ENCODE measurements at regions of chr2 and their contacts with region 1.

Region 1: GRCh38 chr2:219029829-219030165 is 11.5 kb downstream of the CFAP65 start:
- DNase-seq: peak; percentile 64
- H3K4me3 ChIP-seq: no peak overlapping the region
- H3K27ac ChIP-seq: no peak overlapping the region
- H3K4me1 ChIP-seq: no peaks in the 10 kb centered on the region
- H3K27me3 ChIP-seq: peaks cover 13 to 14% of the 10 kb centered on the region in 2 experiments
- CTCF ChIP-seq: peak; percentile 85 to 97
- POLR2A ChIP-seq: no peak

Region 2: DNA sequence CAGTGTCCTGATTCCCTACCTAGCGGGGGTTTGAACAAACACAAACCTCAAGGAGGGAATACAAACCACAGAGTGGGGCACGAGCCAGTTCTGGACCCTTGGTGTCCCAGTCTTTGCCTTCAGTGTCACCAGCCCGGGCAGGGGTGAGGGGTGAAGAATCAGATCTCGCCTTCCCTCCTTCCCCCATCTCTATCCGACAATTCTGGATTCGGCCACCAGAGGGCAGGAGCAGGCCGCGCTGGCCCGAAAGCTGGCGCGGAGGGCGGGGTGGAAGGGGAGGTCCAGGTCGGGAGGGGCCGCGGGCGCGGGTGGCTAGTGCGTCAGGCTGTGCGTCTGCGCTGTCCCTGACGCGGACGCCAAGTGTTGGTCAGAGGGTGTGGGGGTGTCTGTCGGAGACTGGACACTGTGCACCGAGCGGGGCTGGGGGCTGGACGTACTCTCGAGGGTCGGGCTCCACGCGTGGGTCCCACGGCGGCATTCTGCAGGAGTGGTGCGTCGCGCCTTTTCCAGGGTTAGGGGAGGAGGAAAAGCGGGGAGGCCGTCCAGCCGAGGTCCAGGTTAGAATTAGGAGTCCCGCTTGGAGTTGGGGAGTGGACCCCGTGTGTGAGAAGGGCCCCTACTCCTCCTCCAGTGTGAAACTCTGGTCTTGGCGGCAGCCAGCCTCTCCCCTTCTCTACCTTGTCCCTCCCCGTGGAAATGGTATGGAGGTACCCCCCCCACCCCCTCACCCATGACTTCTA is 33.7 kb before region 1 on chr2:
- CTCF ChIA-PET with region 1: interaction called, 26 read pairs
- POLR2A ChIA-PET with region 1: no interaction called
- dilution Hi-C with region 1: no loop called
- intact Hi-C with region 1: no loop called
- DNase-seq: peak; percentile 65
- H3K4me3 ChIP-seq: no peak overlapping the region
- H3K27ac ChIP-seq: no peak overlapping the region
- H3K4me1 ChIP-seq: peaks cover 5% of the 10 kb centered on the region
- H3K27me3 ChIP-seq: peaks cover 79 to 83% of the 10 kb centered on the region in 2 experiments
- CTCF ChIP-seq: peak; percentile 73 to 94
- POLR2A ChIP-seq: no peak

Region 3: GRCh38 chr2:219049282-219049681 is 19.5 kb after region 1 on chr2:
- CTCF ChIA-PET with region 1: interaction called, 28 read pairs
- POLR2A ChIA-PET with region 1: no interaction called
- dilution Hi-C with region 1: no loop called
- intact Hi-C with region 1: no loop called
- DNase-seq: no peak
- H3K4me3 ChIP-seq: no peak overlapping the region
- H3K27ac ChIP-seq: no peak overlapping the region
- H3K4me1 ChIP-seq: no peaks in the 10 kb centered on the region
- H3K27me3 ChIP-seq: peaks cover 0 to 5% of the 10 kb centered on the region in 2 experiments
- CTCF ChIP-seq: no peak
- POLR2A ChIP-seq: no peak

Region 4: DNA sequence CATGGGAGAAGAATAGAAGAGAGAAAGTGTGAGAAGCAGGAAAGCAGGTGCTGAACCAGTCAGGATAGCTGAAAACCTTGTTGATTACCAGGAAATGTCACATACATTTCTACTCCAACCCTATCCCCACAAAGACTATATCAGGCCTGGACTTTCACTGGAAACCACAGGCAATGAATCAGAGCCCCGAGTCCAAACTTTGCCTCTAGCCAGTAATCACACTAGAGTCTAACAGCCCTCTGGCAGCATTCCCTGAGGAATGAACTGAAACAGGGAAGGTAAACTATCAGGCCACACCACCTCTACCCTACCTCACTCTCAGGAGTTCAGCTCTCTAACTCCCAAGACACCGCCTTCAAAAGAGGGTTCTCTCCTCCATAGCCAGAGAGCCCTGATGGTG is 49.6 kb after region 1 on chr2:
- CTCF ChIA-PET with region 1: interaction called, 32 read pairs
- POLR2A ChIA-PET with region 1: no interaction called
- dilution Hi-C with region 1: no loop called
- intact Hi-C with region 1: no loop called
- DNase-seq: no peak
- H3K4me3 ChIP-seq: no peak overlapping the region
- H3K27ac ChIP-seq: no peak overlapping the region
- H3K4me1 ChIP-seq: no peaks in the 10 kb centered on the region
- H3K27me3 ChIP-seq: no peaks in the 10 kb centered on the region
- CTCF ChIP-seq: no peak
- POLR2A ChIP-seq: no peak

Region 5: DNA sequence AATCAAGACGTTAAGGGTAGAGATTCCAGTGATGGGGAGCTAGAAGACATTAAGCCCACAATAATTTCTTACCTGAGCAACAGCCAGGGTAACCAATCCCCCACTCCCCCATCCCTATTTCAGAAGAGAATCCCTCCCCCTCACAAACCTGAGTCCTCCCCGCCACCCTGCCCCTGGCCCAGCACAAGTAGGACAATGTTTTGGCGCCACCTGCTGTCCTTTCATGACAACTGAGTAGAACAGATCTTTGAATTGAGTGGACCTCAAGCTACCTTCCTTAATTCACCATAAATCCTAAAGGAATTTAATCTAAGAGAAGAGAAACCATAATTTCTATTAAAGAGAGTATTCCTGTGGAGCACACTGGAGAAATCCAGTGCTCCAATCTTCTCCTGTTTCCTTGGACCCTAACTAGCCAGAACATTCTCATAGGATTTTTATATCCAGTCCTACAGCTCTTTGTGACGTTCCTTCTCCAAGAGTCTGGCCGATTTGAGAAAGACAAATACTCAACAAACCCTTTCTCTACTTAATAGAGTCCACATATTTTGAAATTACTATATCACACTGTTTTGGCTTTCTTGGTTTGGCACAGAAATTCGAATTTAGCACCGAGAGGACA is 89.7 kb after region 1 on chr2:
- CTCF ChIA-PET with region 1: interaction called, 151 read pairs
- POLR2A ChIA-PET with region 1: no interaction called
- dilution Hi-C with region 1: no loop called
- intact Hi-C with region 1: loop called (anchors 1 kb)
- DNase-seq: peak; percentile 45
- H3K4me3 ChIP-seq: no peak overlapping the region
- H3K27ac ChIP-seq: no peak overlapping the region
- H3K4me1 ChIP-seq: no peaks in the 10 kb centered on the region
- H3K27me3 ChIP-seq: no peaks in the 10 kb centered on the region
- CTCF ChIP-seq: peak; percentile 57 to 64
- POLR2A ChIP-seq: no peak

Region 6: GRCh38 chr2:219155054-219155644 is 125.4 kb after region 1 on chr2:
- CTCF ChIA-PET with region 1: interaction called, 418 read pairs
- POLR2A ChIA-PET with region 1: no interaction called
- dilution Hi-C with region 1: no loop called
- intact Hi-C with region 1: loop called (anchors 1 kb)
- DNase-seq: peak; percentile 61
- H3K4me3 ChIP-seq: no peak overlapping the region
- H3K27ac ChIP-seq: no peak overlapping the region
- H3K4me1 ChIP-seq: peaks cover 6% of the 10 kb centered on the region
- H3K27me3 ChIP-seq: no peaks in the 10 kb centered on the region
- CTCF ChIP-seq: peak; percentile 28 to 36
- POLR2A ChIP-seq: no peak